Panc1 (cell line): ENCODE measurements at regions of chr1 and their contacts with region 1.

Region 1: GRCh38 chr1:43974443-43975248 is at the start of gene ATP6V0B:
- DNase-seq: no peak
- ATAC-seq: peak; percentile 86
- H3K4me3 ChIP-seq: peak within 1 kb of the TSS; percentile 80 to 85
- H3K27ac ChIP-seq: peak within 1 kb of the TSS; percentile 89
- H3K4me1 ChIP-seq: peaks cover 43% of the 10 kb centered on the region
- H3K27me3 ChIP-seq: no peaks in the 10 kb centered on the region
- CTCF ChIP-seq: no peak
- total RNA-seq, gene ATP6V0B: 134 TPM

Region 2: DNA sequence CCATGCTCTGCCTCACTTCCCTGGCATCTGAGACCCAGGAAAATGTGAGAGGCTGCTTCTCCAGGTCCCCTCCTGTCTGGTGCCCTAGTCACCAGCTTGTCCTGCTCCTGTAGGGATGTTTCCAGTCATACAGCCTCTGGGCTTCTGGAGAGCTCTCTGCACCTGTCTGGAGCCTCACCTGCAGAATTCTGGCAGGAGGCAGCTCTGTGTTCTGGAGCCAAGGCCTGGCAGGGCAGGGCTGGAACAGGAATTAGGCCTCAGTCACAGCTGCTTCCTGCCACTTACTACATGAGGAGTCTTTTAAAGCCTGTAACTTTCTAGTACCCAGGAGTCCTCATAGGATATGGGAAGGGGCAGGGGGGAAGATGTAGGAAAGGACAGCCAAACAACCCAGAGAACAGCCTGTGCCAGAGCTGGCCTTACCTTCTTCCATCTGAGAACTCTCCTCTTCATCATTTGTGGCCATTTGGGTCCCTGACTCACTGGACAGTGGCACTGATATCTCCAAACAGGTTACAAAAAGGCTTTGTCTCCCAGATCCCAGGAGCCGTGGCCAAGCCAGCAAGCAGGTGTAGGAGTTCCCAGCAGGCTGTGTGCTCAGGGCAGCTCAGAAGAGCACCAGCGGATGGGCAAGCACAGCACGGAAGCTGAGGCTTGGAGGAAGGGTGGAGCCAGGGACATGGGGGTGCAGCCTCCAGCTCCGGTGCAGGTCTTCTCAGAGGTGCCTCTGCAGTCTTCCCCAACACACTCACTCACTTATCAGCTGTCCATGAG is 72.4 kb before region 1 on chr1:
- CTCF ChIA-PET with region 1: no interaction called
- POLR2A ChIA-PET with region 1: no interaction called
- in situ Hi-C with region 1: no loop called
- intact Hi-C with region 1: no loop called
- DNase-seq: no peak
- ATAC-seq: 0 out of 2 replicates have a peak, but pooled peaks have one; percentile 16
- H3K4me3 ChIP-seq: no peak overlapping the region
- H3K27ac ChIP-seq: no peak overlapping the region
- H3K4me1 ChIP-seq: no peaks in the 10 kb centered on the region
- H3K27me3 ChIP-seq: no peaks in the 10 kb centered on the region
- CTCF ChIP-seq: no peak

Region 3: GRCh38 chr1:44059956-44060355 is 85.3 kb after region 1 on chr1:
- CTCF ChIA-PET with region 1: no interaction called
- POLR2A ChIA-PET with region 1: no interaction called
- in situ Hi-C with region 1: no loop called
- intact Hi-C with region 1: no loop called
- DNase-seq: no peak
- ATAC-seq: no peak
- H3K4me3 ChIP-seq: no peak overlapping the region
- H3K27ac ChIP-seq: no peak overlapping the region
- H3K4me1 ChIP-seq: no peaks in the 10 kb centered on the region
- H3K27me3 ChIP-seq: no peaks in the 10 kb centered on the region
- CTCF ChIP-seq: no peak

Region 4: GRCh38 chr1:45589861-45590260 is 1615.2 kb after region 1 on chr1:
- CTCF ChIA-PET with region 1: interaction called, 10 read pairs
- POLR2A ChIA-PET with region 1: no interaction called
- in situ Hi-C with region 1: no loop called
- intact Hi-C with region 1: no loop called
- DNase-seq: no peak
- ATAC-seq: peak; percentile 46
- H3K4me3 ChIP-seq: peak overlapping the region; percentile 12 to 24; a peak in 3 of 4 replicates
- H3K27ac ChIP-seq: peak overlapping the region; percentile 39; the same call in 1 of the 2 replicates
- H3K4me1 ChIP-seq: peaks cover 12% of the 10 kb centered on the region
- H3K27me3 ChIP-seq: no peaks in the 10 kb centered on the region
- CTCF ChIP-seq: no peak